Prostate gland (tissue), 2 donors: ENCODE measurements at regions of chr15 and their contacts with region 1.

Region 1: DNA sequence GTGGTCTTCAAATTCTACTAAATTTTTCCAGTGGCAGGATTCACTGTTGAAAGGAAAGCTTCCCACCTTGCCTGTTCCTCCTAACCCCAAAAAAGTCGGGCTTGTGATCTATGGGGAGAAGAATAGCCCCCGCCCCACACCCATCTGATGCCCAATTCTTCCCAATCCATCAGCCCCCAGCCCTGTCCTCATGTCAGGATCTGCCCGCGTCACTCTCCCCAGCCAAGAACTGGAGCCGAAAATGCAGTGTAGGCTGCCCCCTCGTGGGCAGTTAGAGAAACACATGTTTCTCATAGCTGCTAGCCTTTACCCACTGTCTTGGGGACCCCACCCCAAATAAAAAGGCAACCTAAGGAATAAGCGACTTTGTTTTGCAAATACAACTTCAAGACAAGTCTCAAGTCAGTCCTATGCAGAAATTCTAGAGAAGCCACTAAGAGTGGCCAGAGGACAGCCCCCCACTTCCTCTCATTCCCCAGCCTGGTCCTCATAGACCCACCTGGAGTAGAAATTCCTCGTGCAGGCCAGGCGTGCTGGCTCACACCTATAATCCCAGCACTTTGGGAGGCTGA is 13.0 kb upstream of the CSK start:
- DNase-seq: peak; percentile 57
- H3K4me3 ChIP-seq: no peak overlapping the region
- H3K27ac ChIP-seq: no peak overlapping the region
- H3K4me1 ChIP-seq: no peaks in the 10 kb centered on the region
- H3K27me3 ChIP-seq: no peaks in the 10 kb centered on the region
- CTCF ChIP-seq: peak; percentile 75 to 90 (median 86)
- POLR2A ChIP-seq: no peak

Region 2: GRCh38 chr15:74950078-74951000 is 181.5 kb after region 1 on chr15:
- intact Hi-C with region 1: loop called (anchors 2 kb)
- DNase-seq: peak; percentile 75
- H3K4me3 ChIP-seq: no peak overlapping the region
- H3K27ac ChIP-seq: no peak overlapping the region
- H3K4me1 ChIP-seq: no peaks in the 10 kb centered on the region
- H3K27me3 ChIP-seq: no peaks in the 10 kb centered on the region
- CTCF ChIP-seq: peak; percentile 93 to 98 (median 96)
- POLR2A ChIP-seq: no peak

Region 3: DNA sequence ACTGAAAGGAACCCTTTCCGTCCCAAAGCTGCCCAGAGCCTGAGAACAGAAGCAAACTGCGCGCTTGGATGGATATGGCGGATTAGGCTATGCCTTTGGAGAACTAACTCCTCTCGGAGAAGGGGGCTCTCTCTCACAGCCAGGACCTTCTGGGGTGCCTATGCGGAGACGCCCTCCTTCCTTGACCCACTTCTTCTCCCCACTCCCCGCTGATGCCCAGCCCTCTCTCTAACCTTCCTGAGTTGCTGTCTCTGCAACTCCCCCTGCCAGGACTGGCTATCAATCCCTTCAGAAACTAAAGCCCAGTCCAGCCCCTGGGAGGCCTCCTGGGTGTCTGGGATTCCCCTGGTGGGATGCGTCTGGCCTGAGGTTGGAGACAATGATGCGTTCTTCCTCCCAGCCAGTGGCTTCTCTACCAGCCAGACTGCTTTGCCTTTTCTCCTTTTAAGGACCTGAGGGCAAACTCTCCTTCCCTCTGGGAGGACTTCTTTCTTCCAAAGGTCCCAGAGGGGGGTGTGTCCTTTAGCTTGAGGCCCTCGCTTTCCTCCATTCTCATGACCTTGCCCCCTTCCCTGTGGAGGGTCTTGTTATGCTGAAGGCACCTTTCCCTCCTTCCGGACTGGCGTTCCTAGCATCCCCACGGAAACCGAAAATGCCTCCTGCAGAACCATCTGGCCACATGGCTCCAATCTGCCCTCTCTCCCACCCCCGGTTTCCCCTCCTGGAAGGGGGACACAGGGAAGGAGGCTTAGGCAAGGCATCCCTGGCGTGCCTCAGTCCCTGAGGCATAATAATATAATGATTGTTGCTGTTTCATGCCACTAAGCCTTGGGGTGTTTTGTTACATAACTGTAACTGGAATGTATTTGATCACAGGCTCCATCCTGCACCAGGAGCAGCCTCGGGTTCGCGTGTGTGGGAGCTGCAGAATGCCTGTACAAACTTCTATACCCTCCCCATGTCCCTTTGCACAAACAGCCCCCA is 369.5 kb after region 1 on chr15:
- intact Hi-C with region 1: no loop called
- DNase-seq: no peak
- H3K4me3 ChIP-seq: no peak overlapping the region
- H3K27ac ChIP-seq: no peak overlapping the region
- H3K4me1 ChIP-seq: no peaks in the 10 kb centered on the region
- H3K27me3 ChIP-seq: no peaks in the 10 kb centered on the region
- CTCF ChIP-seq: no peak
- POLR2A ChIP-seq: no peak